ENCODE measurements at regions of chr1 and their contacts with region 1.

Region 1: GRCh38 chr1:17439250-17440073 is at the start of gene RCC2:
- DNase-seq: peak; percentile 54
- H3K4me3 ChIP-seq: peak within 1 kb of the TSS; percentile 77
- H3K27ac ChIP-seq: peak within 1 kb of the TSS; percentile 84
- H3K27me3 ChIP-seq: no peaks in the 10 kb centered on the region
- CTCF ChIP-seq: no peak
- polyA plus RNA-seq, gene RCC2: 43.3 and 43.4 TPM in 2 replicates

Region 2: GRCh38 chr1:17423781-17424245 is 15.6 kb before region 1 on chr1:
- CTCF ChIA-PET with region 1: interaction called, 9 read pairs
- POLR2A ChIA-PET with region 1: interaction called, 10 read pairs
- DNase-seq: no peak
- H3K4me3 ChIP-seq: no peak overlapping the region
- H3K27ac ChIP-seq: peak overlapping the region; percentile 52
- H3K27me3 ChIP-seq: no peaks in the 10 kb centered on the region
- CTCF ChIP-seq: no peak

Region 3: DNA sequence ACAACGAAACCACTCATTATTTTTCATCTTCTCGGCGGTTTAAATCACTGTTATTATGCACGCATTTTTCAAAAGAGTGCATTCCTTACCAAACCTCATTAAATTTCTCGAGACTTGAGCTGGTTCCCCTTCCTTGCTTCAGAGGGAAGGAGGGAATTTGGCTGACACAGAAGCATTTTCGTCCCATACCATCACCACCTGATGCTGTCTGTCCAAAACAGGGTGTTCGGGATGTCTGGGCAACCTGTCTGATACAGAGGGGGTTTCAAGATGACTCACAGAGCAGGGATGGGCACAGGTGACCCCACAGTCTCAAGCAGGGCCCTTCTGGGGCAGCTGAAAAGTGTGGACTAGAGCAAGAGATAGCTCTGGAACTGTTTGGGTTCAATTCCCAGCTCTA is 12.3 kb after region 1 on chr1:
- CTCF ChIA-PET with region 1: interaction called, 20 read pairs
- POLR2A ChIA-PET with region 1: no interaction called
- DNase-seq: no peak
- H3K4me3 ChIP-seq: no peak overlapping the region
- H3K27ac ChIP-seq: no peak overlapping the region
- H3K27me3 ChIP-seq: no peaks in the 10 kb centered on the region
- CTCF ChIP-seq: no peak

Measured in AG04450 (cell line).